Activated T-helper 1 cell treated with anti-CD3 and anti-CD28 coated beads, Interleukin-12 subunit alpha, Interleukin-12 subunit beta, Interleukin-2, Interleukin-4 antibody, amounts not matched to agents 30 ng/mL and 10 ng/mL and 1 ng/mL, durations not matched to agents 14 hours and 24 hours and 36 hours (primary cell): ENCODE measurements at regions of chr10 and their contacts with region 1.

Region 1: GRCh38 chr10:118259288-118259906 is 82.7 kb downstream of the FAM204A start:
- DNase-seq: no peak
- H3K4me3 Mint-ChIP-seq: no peak overlapping the region
- H3K27ac Mint-ChIP-seq: no peak overlapping the region
- H3K4me1 Mint-ChIP-seq: no peaks in the 10 kb centered on the region
- H3K27me3 Mint-ChIP-seq: peaks cover 23% of the 10 kb centered on the region

Region 2: GRCh38 chr10:118423800-118424479 is 164.5 kb after region 1 on chr10:
- intact Hi-C with region 1: loop called (anchors 10 kb)
- DNase-seq: peak; percentile 41
- H3K4me3 Mint-ChIP-seq: no peak overlapping the region
- H3K27ac Mint-ChIP-seq: no peak overlapping the region
- H3K4me1 Mint-ChIP-seq: no peaks in the 10 kb centered on the region
- H3K27me3 Mint-ChIP-seq: peaks cover 3% of the 10 kb centered on the region